PC-9 (cell line): ENCODE measurements at regions of chr1 and their contacts with region 1.

Region 1: GRCh38 chr1:24635195-24635843 is 7.8 kb upstream of the SRRM1 start:
- DNase-seq: peak in 1 of 2 experiments; percentile 46
- H3K4me3 ChIP-seq: no peak overlapping the region
- H3K27ac ChIP-seq: no peak overlapping the region
- H3K4me1 ChIP-seq: no peaks in the 10 kb centered on the region
- H3K27me3 ChIP-seq: no peaks in the 10 kb centered on the region
- CTCF ChIP-seq: peak; percentile 69

Region 2: GRCh38 chr1:24586970-24587820 is 48.1 kb before region 1 on chr1:
- CTCF ChIA-PET with region 1: no interaction called
- POLR2A ChIA-PET with region 1: no interaction called
- intact Hi-C with region 1: loop called (anchors 2 kb)
- DNase-seq: peak; percentile 29 to 37
- H3K4me3 ChIP-seq: no peak overlapping the region
- H3K27ac ChIP-seq: no peak overlapping the region
- H3K4me1 ChIP-seq: no peaks in the 10 kb centered on the region
- H3K27me3 ChIP-seq: no peaks in the 10 kb centered on the region
- CTCF ChIP-seq: peak; percentile 76

Region 3: DNA sequence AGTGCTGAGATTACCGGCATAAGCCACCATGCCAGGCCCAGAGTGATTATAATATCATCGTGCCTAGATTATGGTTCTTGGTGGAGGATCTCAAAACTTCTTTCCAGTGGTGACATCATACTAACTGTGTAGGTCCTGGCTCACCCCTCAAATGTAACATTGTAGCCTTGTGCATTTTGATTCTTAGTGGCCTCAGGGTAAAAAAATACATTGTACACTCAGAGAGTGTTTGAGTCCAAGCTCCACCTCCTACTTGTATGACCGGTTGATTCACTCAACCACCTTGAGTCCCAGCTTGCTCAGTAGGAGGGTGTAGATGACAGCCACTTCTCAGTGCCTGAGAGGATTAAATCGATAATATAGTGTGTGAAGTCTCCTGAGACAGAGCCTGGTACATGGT is 41.2 kb before region 1 on chr1:
- CTCF ChIA-PET with region 1: no interaction called
- POLR2A ChIA-PET with region 1: no interaction called
- intact Hi-C with region 1: loop called (anchors 2 kb)
- DNase-seq: peak; percentile 34 to 72
- H3K4me3 ChIP-seq: no peak overlapping the region
- H3K27ac ChIP-seq: no peak overlapping the region
- H3K4me1 ChIP-seq: 0 out of 2 replicates have a peak, but pooled peaks cover 6% of the 10 kb centered on the region
- H3K27me3 ChIP-seq: no peaks in the 10 kb centered on the region
- CTCF ChIP-seq: no peak

Region 4: GRCh38 chr1:24606298-24607240 is 28.8 kb before region 1 on chr1:
- CTCF ChIA-PET with region 1: no interaction called
- POLR2A ChIA-PET with region 1: no interaction called
- intact Hi-C with region 1: no loop called
- DNase-seq: peak in 1 of 2 experiments; percentile 63
- H3K4me3 ChIP-seq: no peak overlapping the region
- H3K27ac ChIP-seq: no peak overlapping the region
- H3K4me1 ChIP-seq: peaks cover 14% of the 10 kb centered on the region
- H3K27me3 ChIP-seq: no peaks in the 10 kb centered on the region
- CTCF ChIP-seq: no peak

Region 5: GRCh38 chr1:24720152-24720551 is 84.8 kb after region 1 on chr1:
- CTCF ChIA-PET with region 1: no interaction called
- POLR2A ChIA-PET with region 1: no interaction called
- intact Hi-C with region 1: no loop called
- DNase-seq: peak in 1 of 2 experiments; percentile 74
- H3K4me3 ChIP-seq: no peak overlapping the region
- H3K27ac ChIP-seq: peak overlapping the region; percentile 60
- H3K4me1 ChIP-seq: peaks cover 22% of the 10 kb centered on the region
- H3K27me3 ChIP-seq: no peaks in the 10 kb centered on the region
- CTCF ChIP-seq: no peak